ENCODE measurements at regions of chr5 and their contacts with region 1.

Region 1: GRCh38 chr5:81506900-81507588 is 113.1 kb upstream of the ACOT12 start:
- DNase-seq: peak; percentile 65
- ATAC-seq: peak; percentile 96
- H3K4me3 ChIP-seq: no peak overlapping the region
- H3K27ac ChIP-seq: no peak overlapping the region
- H3K4me1 ChIP-seq: no peaks in the 10 kb centered on the region
- H3K27me3 ChIP-seq: no peaks in the 10 kb centered on the region
- CTCF ChIP-seq: peak; percentile 78

Region 2: DNA sequence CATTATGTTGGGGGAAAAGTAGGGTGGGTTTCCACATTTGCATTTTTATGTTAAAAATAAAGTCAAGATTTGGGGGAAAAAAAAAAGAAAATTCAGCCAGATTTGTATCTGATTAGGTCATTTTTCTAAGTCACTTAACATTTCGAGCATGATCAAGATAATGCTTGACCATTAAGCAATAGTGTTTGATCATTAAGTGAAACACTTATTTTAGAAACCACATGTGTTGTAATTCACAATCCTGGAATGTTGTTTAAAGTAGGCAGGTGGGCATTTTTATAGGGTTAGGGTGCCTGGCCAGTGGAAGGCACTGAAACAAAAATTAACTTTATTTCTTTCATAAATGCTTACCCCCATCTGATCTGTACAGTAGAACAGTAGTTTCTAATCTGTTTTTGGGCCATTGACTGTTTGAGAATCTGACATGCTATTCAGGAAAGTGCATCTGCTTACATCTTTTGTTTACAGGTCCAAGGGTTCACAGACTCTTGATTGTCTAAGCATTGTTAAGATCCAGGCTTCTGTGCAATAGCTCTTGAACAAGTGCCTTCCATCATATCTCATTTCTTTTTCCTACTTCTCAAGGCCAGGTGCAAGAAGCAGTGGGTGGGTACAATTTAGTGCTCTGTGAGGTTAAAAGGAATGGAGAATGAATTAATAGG is 196.5 kb before region 1 on chr5:
- CTCF ChIA-PET with region 1: no interaction called
- POLR2A ChIA-PET with region 1: no interaction called
- intact Hi-C with region 1: no loop called
- DNase-seq: no peak
- ATAC-seq: no peak
- H3K4me3 ChIP-seq: no peak overlapping the region
- H3K27ac ChIP-seq: no peak overlapping the region
- H3K4me1 ChIP-seq: no peaks in the 10 kb centered on the region
- H3K27me3 ChIP-seq: no peaks in the 10 kb centered on the region
- CTCF ChIP-seq: no peak

Region 3: GRCh38 chr5:81425569-81425968 is 81.5 kb before region 1 on chr5:
- CTCF ChIA-PET with region 1: no interaction called
- POLR2A ChIA-PET with region 1: no interaction called
- intact Hi-C with region 1: loop called (anchors 1 kb)
- DNase-seq: peak; percentile 52
- ATAC-seq: peak; percentile 7; the same call in 1 of the 2 replicates
- H3K4me3 ChIP-seq: no peak overlapping the region
- H3K27ac ChIP-seq: no peak overlapping the region
- H3K4me1 ChIP-seq: peaks cover 73% of the 10 kb centered on the region
- H3K27me3 ChIP-seq: no peaks in the 10 kb centered on the region
- CTCF ChIP-seq: peak; percentile 68

Region 4: DNA sequence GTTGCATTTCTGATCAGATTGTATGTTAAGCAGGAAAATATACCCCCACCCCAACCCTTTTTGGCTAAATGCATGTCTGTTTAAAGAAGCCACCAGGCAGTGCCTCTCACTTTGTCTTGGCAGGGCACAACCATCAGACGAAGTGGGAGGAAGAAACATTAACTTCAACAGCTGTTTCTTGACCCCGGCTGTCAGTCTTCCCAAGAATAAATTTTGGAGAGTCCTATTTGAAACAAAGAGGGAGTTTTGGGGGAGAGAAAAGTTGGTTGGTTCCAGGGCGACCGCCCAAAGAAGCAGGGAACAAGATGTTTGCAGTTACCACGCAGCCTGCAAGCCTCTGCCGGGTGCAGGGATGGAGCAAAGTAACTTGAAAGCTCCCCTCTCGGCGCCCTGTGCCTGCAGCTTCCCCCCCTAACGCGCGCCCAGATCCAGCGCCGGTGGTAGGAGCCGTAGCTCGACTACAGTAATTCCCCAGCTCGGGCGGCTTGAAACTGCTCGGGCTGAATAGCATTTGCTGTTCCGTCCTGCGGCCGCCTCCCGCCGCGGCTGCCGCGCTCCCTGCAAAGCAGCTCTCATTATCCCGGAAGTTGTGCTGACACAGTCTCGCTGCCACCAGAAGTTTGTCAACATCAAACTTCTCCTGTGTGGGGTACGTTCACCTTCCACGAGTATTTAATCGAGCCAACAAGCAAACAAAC is 344.6 kb after region 1 on chr5:
- CTCF ChIA-PET with region 1: interaction called, 4 read pairs
- POLR2A ChIA-PET with region 1: no interaction called
- intact Hi-C with region 1: loop called (anchors 5 kb)
- DNase-seq: peak; percentile 86
- ATAC-seq: peak; percentile 92
- H3K4me3 ChIP-seq: peak overlapping the region; percentile 67
- H3K27ac ChIP-seq: peak overlapping the region; percentile 71
- H3K4me1 ChIP-seq: peaks cover 10% of the 10 kb centered on the region
- H3K27me3 ChIP-seq: no peaks in the 10 kb centered on the region
- CTCF ChIP-seq: no peak

Region 5: GRCh38 chr5:82107267-82107666 is 600.2 kb after region 1 on chr5:
- CTCF ChIA-PET with region 1: no interaction called
- POLR2A ChIA-PET with region 1: no interaction called
- intact Hi-C with region 1: loop called (anchors 10 kb)
- DNase-seq: peak; percentile 30
- ATAC-seq: peak; percentile 56; the same call in 1 of the 2 replicates
- H3K4me3 ChIP-seq: no peak overlapping the region
- H3K27ac ChIP-seq: no peak overlapping the region
- H3K4me1 ChIP-seq: no peaks in the 10 kb centered on the region
- H3K27me3 ChIP-seq: no peaks in the 10 kb centered on the region
- CTCF ChIP-seq: peak; percentile 76

Region 6: GRCh38 chr5:82225525-82226172 is 718.6 kb after region 1 on chr5:
- CTCF ChIA-PET with region 1: no interaction called
- POLR2A ChIA-PET with region 1: no interaction called
- intact Hi-C with region 1: loop called (anchors 5 kb)
- DNase-seq: peak; percentile 80
- ATAC-seq: peak; percentile 93
- H3K4me3 ChIP-seq: no peak overlapping the region
- H3K27ac ChIP-seq: no peak overlapping the region
- H3K4me1 ChIP-seq: no peaks in the 10 kb centered on the region
- H3K27me3 ChIP-seq: no peaks in the 10 kb centered on the region
- CTCF ChIP-seq: peak; percentile 88

Region 7: DNA sequence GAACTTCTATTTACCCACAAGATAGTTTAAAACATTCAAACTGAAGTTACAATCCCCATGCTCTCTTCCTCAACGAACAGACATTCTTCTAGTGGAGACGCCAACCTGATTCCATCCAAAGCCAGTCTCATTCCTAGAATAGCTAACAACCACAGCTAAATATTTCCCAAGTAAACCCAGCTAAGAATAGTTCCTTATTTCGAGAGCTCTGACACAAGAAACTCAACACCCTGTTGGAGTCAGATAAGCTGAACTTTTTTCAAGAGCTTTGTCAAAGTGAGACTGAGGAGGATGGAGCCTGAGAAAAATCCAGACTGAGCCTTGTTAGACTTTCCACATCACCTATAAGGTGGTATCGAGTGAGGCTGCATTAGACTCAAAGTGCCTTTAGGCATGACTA is 827.8 kb after region 1 on chr5:
- CTCF ChIA-PET with region 1: no interaction called
- POLR2A ChIA-PET with region 1: no interaction called
- intact Hi-C with region 1: no loop called
- DNase-seq: no peak
- ATAC-seq: no peak
- H3K4me3 ChIP-seq: no peak overlapping the region
- H3K27ac ChIP-seq: no peak overlapping the region
- H3K4me1 ChIP-seq: no peaks in the 10 kb centered on the region
- H3K27me3 ChIP-seq: no peaks in the 10 kb centered on the region
- CTCF ChIP-seq: no peak